ENCODE measurements at regions of chr3 and their contacts with region 1.

Region 1: GRCh38 chr3:187319699-187320302 is 28.3 kb upstream of the MASP1 start:
- DNase-seq: peak; percentile 70
- ATAC-seq: peak; percentile 94
- H3K4me3 ChIP-seq: no peak overlapping the region
- H3K27ac ChIP-seq: no peak overlapping the region
- H3K4me1 ChIP-seq: peaks cover 2% of the 10 kb centered on the region; the same call in 1 of the 2 replicates
- H3K27me3 ChIP-seq: peaks cover 9% of the 10 kb centered on the region
- CTCF ChIP-seq: peak; percentile 88
- POLR2A ChIP-seq: no peak
- RAD21 ChIP-seq: peak; percentile 81

Region 2: DNA sequence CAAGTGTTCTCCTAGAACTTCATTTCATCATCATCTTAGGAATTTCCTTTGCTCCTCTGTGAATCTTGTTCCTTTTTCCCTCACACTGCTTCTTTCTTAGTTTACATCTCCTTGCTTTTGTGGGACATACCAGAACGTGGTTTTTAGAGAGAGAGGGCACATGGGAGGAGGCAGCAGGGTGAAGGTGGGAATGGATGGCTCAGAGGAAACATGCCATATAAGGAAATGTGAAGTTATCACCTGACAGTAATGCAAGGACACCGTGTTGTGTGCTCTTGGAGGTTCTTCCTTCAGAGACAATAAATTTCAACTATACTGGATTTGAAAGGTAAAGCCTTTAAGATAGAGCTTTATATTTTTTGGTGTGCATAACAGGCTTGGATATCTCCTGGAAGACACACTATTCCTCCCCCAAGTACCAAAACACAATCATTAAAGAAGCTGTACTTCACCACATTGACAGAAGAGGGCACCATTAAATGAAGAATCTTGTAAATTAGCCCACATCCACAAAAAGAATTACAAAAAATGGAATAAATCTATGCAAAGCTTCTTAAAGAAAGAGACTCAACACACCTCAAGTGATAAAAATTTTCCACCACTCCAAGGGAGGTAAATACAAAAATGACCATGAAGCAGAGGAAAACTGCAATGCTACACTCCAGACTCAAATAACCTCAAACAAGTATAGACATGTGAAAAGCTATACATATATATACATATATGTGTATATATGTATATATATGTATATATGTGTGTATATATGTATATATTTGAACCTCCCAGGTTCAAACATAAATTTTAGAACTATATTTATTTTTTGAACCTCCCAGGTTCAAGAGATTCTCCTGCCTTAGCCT is 206.6 kb before region 1 on chr3:
- CTCF ChIA-PET with region 1: interaction called, 13 read pairs
- POLR2A ChIA-PET with region 1: no interaction called
- dilution Hi-C with region 1: no loop called
- in situ Hi-C with region 1: no loop called
- intact Hi-C with region 1: loop called (anchors 5 kb)
- DNase-seq: peak; percentile 48
- ATAC-seq: peak; percentile 86
- H3K4me3 ChIP-seq: no peak overlapping the region
- H3K27ac ChIP-seq: no peak overlapping the region
- H3K4me1 ChIP-seq: no peaks in the 10 kb centered on the region
- H3K27me3 ChIP-seq: no peaks in the 10 kb centered on the region
- CTCF ChIP-seq: peak; percentile 57
- POLR2A ChIP-seq: no peak
- RAD21 ChIP-seq: peak; percentile 56

Region 3: GRCh38 chr3:187227658-187228258 is 92.0 kb before region 1 on chr3:
- CTCF ChIA-PET with region 1: interaction called, 10 read pairs
- POLR2A ChIA-PET with region 1: no interaction called
- dilution Hi-C with region 1: no loop called
- in situ Hi-C with region 1: no loop called
- intact Hi-C with region 1: loop called (anchors 1 kb)
- DNase-seq: peak; percentile 86
- ATAC-seq: peak; percentile 84
- H3K4me3 ChIP-seq: no peak overlapping the region
- H3K27ac ChIP-seq: peak overlapping the region; percentile 8; the same call in 1 of the 2 replicates
- H3K4me1 ChIP-seq: peaks cover 17% of the 10 kb centered on the region
- H3K27me3 ChIP-seq: no peaks in the 10 kb centered on the region
- CTCF ChIP-seq: no peak
- POLR2A ChIP-seq: no peak
- RAD21 ChIP-seq: no peak

Region 4: DNA sequence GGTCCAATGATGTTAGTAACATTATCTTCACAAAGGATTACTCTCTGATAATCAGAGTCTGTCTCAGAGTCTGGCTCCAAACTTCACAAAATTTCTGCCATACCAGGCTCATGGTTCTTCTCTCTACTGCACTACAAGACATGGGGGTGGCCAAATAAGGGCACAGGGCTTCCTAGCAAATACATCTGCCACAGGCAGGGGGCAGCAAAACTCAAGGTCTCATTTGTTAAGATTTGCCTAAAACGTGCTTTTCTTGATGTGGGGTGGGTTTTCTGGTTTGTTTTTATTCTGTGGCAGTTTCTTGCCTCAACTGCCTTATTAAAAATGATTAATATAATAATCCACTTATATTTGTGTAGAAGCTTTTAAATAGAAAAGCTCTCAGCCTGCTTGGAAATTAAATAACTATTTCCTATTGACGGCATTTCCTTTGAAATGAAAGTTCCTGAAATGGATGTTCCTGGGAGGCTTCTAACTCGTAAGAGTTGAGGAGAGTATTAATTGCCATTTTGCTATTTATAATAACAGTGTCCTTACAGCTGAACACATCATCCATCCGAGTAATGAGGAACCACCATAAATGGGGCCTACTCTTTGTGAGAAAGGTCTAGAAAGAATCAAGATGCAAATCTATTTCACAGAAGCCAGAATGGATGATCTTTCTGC is 296.6 kb after region 1 on chr3:
- CTCF ChIA-PET with region 1: interaction called, 11 read pairs
- POLR2A ChIA-PET with region 1: no interaction called
- dilution Hi-C with region 1: no loop called
- in situ Hi-C with region 1: no loop called
- intact Hi-C with region 1: loop called (anchors 1 kb)
- DNase-seq: peak; percentile 55
- ATAC-seq: peak; percentile 72
- H3K4me3 ChIP-seq: no peak overlapping the region
- H3K27ac ChIP-seq: no peak overlapping the region
- H3K4me1 ChIP-seq: no peaks in the 10 kb centered on the region
- H3K27me3 ChIP-seq: peaks cover 5% of the 10 kb centered on the region
- CTCF ChIP-seq: peak; percentile 60
- POLR2A ChIP-seq: no peak
- RAD21 ChIP-seq: peak; percentile 46

Region 5: GRCh38 chr3:187679638-187680396 is 360.0 kb after region 1 on chr3:
- CTCF ChIA-PET with region 1: interaction called, 168 read pairs
- POLR2A ChIA-PET with region 1: interaction called, 5 read pairs
- dilution Hi-C with region 1: loop called (anchors 25 kb)
- in situ Hi-C with region 1: loop called (anchors 5 kb)
- intact Hi-C with region 1: loop called (anchors 1 kb)
- DNase-seq: peak; percentile 68
- ATAC-seq: peak; percentile 97
- H3K4me3 ChIP-seq: no peak overlapping the region
- H3K27ac ChIP-seq: no peak overlapping the region
- H3K4me1 ChIP-seq: no peaks in the 10 kb centered on the region
- H3K27me3 ChIP-seq: peaks cover 29% of the 10 kb centered on the region
- CTCF ChIP-seq: peak; percentile 94
- POLR2A ChIP-seq: no peak
- RAD21 ChIP-seq: peak; percentile 94

Region 6: GRCh38 chr3:187714404-187714979 is 394.7 kb after region 1 on chr3:
- CTCF ChIA-PET with region 1: interaction called, 12 read pairs
- POLR2A ChIA-PET with region 1: no interaction called
- dilution Hi-C with region 1: no loop called
- in situ Hi-C with region 1: no loop called
- intact Hi-C with region 1: loop called (anchors 1 kb)
- DNase-seq: peak; percentile 73
- ATAC-seq: peak; percentile 93
- H3K4me3 ChIP-seq: no peak overlapping the region
- H3K27ac ChIP-seq: no peak overlapping the region
- H3K4me1 ChIP-seq: no peaks in the 10 kb centered on the region
- H3K27me3 ChIP-seq: peaks cover 7% of the 10 kb centered on the region
- CTCF ChIP-seq: peak; percentile 92
- POLR2A ChIP-seq: peak; percentile 43; the same call in 1 of the 2 replicates
- RAD21 ChIP-seq: peak; percentile 99

Region 7: GRCh38 chr3:187955076-187955952 is 635.5 kb after region 1 on chr3:
- CTCF ChIA-PET with region 1: no interaction called
- POLR2A ChIA-PET with region 1: no interaction called
- dilution Hi-C with region 1: no loop called
- in situ Hi-C with region 1: no loop called
- intact Hi-C with region 1: no loop called
- DNase-seq: peak; percentile 93
- ATAC-seq: peak; percentile 74
- H3K4me3 ChIP-seq: no peak overlapping the region
- H3K27ac ChIP-seq: peak overlapping the region; percentile 60
- H3K4me1 ChIP-seq: peaks cover 14% of the 10 kb centered on the region
- H3K27me3 ChIP-seq: no peaks in the 10 kb centered on the region; the same call in none of the 2 replicates
- CTCF ChIP-seq: no peak
- POLR2A ChIP-seq: 0 out of 2 replicates have a peak, but pooled peaks have one; percentile 33
- RAD21 ChIP-seq: no peak